Activated naive CD4-positive, alpha-beta T cell treated with anti-CD3 and anti-CD28 coated beads for 36 hours (primary cell): ENCODE measurements at regions of chr9 and their contacts with region 1.

Region 1: GRCh38 chr9:7298123-7298522 is 501.5 kb downstream of the DMAC1 start:
- DNase-seq: peak; percentile 56
- H3K4me3 Mint-ChIP-seq: no peak overlapping the region
- H3K27ac Mint-ChIP-seq: no peak overlapping the region
- H3K4me1 Mint-ChIP-seq: peaks cover 13% of the 10 kb centered on the region
- H3K27me3 Mint-ChIP-seq: peaks cover 7% of the 10 kb centered on the region

Region 2: GRCh38 chr9:6034954-6035353 is 1263.2 kb before region 1 on chr9:
- CTCF ChIA-PET with region 1: no interaction called
- intact Hi-C with region 1: no loop called
- DNase-seq: no peak
- H3K4me3 Mint-ChIP-seq: no peak overlapping the region
- H3K27ac Mint-ChIP-seq: no peak overlapping the region
- H3K4me1 Mint-ChIP-seq: no peaks in the 10 kb centered on the region
- H3K27me3 Mint-ChIP-seq: peaks cover 3% of the 10 kb centered on the region

Region 3: DNA sequence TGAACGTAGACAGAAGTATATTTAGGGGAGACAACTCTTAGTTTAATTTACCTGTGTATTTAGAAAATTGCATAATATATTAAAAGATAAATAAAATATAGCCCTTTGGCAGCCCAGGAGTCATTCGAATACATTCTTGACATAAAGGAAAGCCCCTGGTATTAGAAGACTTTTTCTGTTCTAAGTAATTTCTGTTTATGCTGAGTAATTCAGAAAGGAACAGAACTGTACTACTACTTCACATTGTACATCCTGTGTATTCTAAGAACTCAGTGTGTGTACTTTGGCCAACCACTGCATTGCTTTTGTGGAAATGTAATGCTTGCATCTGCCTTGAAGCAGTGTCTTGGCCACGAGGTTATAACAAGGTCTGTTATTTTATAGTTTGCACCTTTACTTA is 404.0 kb before region 1 on chr9:
- CTCF ChIA-PET with region 1: no interaction called
- intact Hi-C with region 1: loop called (anchors 1 kb)
- DNase-seq: peak; percentile 25
- H3K4me3 Mint-ChIP-seq: no peak overlapping the region
- H3K27ac Mint-ChIP-seq: no peak overlapping the region
- H3K4me1 Mint-ChIP-seq: peaks cover 44% of the 10 kb centered on the region
- H3K27me3 Mint-ChIP-seq: no peaks in the 10 kb centered on the region

Region 4: DNA sequence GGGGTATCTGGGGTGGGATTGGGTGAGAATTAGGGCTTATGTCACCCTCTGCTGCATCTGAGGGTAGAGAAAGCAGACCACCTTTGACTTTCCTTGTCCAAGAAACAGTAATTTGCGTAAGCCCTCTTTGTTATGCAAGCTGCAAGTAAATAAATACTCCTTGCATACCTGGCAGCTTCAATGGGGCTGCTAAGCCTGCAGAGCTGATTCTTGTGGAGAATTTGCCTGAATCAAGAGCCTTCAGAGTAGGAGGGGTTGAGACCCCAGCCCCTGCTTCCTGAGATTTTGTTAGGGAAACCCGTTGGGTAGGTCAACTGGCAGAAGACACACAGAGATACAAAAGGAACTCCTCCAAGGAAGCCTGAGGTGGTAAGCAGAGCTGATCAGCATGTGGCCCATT is 13.6 kb before region 1 on chr9:
- CTCF ChIA-PET with region 1: no interaction called
- intact Hi-C with region 1: loop called (anchors 1 kb)
- DNase-seq: no peak
- H3K4me3 Mint-ChIP-seq: no peak overlapping the region
- H3K27ac Mint-ChIP-seq: no peak overlapping the region
- H3K4me1 Mint-ChIP-seq: no peaks in the 10 kb centered on the region
- H3K27me3 Mint-ChIP-seq: peaks cover 22% of the 10 kb centered on the region

Region 5: GRCh38 chr9:7489036-7489435 is 190.9 kb after region 1 on chr9:
- CTCF ChIA-PET with region 1: no interaction called
- intact Hi-C with region 1: no loop called
- DNase-seq: no peak
- H3K4me3 Mint-ChIP-seq: no peak overlapping the region
- H3K27ac Mint-ChIP-seq: no peak overlapping the region
- H3K4me1 Mint-ChIP-seq: no peaks in the 10 kb centered on the region
- H3K27me3 Mint-ChIP-seq: peaks cover 1% of the 10 kb centered on the region